ENCODE measurements at regions of chr22 and their contacts with region 1.

Region 1: GRCh38 chr22:33049119-33049729 is 9.0 kb downstream of the SYN3 start:
- DNase-seq: peak; percentile 78
- H3K4me3 Mint-ChIP-seq: no peak overlapping the region
- H3K27ac Mint-ChIP-seq: no peak overlapping the region
- H3K4me1 Mint-ChIP-seq: no peaks in the 10 kb centered on the region
- H3K27me3 Mint-ChIP-seq: peaks cover 40% of the 10 kb centered on the region
- CTCF ChIP-seq: peak; percentile 84

Region 2: DNA sequence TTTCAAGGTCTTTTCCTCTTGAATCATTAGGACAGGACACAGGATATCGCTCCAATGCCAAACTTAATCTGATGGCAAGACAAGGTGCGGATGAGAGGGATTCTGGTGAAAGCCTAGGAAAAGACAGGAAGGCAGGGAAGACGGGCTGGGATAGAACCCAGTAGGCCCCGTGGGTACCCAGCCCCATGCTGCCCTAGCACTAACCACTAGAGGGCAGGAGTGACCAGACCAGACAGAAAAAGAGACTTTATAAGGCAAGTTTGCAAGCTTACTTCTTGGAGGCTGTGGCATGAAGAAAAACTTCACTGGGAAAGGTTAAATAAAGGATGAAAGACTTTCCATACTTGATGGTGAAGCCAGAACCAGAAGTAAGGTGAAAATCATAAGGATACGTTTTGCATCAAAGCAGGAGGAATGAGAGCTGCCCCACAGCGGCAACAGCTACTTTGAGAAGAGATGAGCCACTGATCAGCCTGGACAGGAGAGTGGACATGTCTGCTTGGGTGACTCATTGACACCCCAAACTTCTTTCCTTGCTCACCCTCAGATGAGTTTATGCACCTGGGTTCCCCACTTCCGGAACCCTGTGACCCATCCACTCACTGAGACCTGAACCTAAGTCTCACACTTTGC is 30.9 kb before region 1 on chr22:
- CTCF ChIA-PET with region 1: interaction called, 5 read pairs
- intact Hi-C with region 1: loop called (anchors 1 kb)
- DNase-seq: peak; percentile 77
- H3K4me3 Mint-ChIP-seq: no peak overlapping the region
- H3K27ac Mint-ChIP-seq: no peak overlapping the region
- H3K4me1 Mint-ChIP-seq: no peaks in the 10 kb centered on the region
- H3K27me3 Mint-ChIP-seq: peaks cover 29% of the 10 kb centered on the region
- CTCF ChIP-seq: peak; percentile 87

Measured in Calu3 (cell line).